ENCODE measurements at regions of chr22 and their contacts with region 1.

Region 1: DNA sequence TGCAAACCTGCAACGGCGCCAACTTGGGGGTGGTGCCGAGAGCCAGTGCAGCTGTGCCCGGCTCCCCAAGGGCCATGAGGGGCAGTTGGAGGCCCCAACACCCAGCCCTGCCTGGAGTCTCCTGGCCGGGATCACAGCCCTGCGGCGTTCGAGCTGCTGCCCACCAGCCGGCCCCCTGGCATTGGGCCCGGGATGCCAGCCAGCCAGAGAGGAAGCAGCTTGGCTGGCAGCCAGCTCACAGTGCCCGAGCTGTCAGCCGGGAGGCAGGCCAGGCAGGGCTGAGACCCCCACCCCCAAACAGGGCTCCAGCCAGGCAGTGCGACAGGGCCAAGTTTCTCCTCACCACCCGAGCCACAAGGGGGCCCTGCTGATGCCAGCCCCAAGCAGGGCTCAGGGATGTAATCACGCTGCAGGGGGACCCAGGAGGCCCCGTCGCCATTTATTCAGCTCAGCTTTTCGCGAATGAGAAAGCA is 26.0 kb upstream of the TCF20 start:
- DNase-seq: peak; percentile 60 to 72 (median 67)
- H3K4me3 ChIP-seq: no peak overlapping the region
- H3K27ac ChIP-seq: no peak overlapping the region
- H3K4me1 ChIP-seq: peaks cover 5 to 48% (median 42%) of the 10 kb centered on the region in 4 experiments
- H3K27me3 ChIP-seq: no peaks in the 10 kb centered on the region

Region 2: DNA sequence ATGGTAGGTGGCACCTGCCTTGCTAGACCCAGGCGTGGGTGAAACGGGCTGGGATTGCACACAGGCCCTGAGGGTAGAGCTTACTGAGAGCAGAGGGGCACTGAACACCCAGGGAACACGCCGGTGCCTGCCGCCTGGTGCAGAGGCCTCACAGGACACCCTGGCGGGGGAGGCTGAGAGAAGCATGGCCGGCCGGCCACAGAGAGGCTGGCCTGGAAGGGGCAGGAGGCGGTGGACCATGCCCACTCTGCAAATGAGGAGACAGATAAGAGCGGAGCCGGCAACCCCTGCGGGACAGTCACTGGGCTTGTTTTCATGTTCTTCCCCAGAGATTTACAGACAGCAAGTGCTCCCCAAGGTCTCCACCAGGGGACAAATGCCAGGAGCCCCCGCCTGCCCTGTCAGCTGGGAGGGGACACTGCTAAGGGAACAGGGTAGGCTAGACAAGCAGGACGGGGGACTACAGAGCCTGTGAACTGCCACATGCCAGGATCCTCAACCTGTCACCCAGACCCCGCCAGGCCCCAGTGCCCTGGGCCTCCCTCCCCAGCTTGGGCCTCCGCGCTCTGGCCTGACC is 12.6 kb after region 1 on chr22:
- CTCF ChIA-PET with region 1: interaction called, 29 read pairs
- POLR2A ChIA-PET with region 1: no interaction called
- DNase-seq: no peak
- H3K4me3 ChIP-seq: no peak overlapping the region
- H3K27ac ChIP-seq: no peak overlapping the region
- H3K4me1 ChIP-seq: peaks cover 0 to 22% (median 6%) of the 10 kb centered on the region in 4 experiments
- H3K27me3 ChIP-seq: no peaks in the 10 kb centered on the region

Region 3: GRCh38 chr22:42313804-42314581 is 17.6 kb after region 1 on chr22:
- CTCF ChIA-PET with region 1: interaction called, 29 read pairs
- POLR2A ChIA-PET with region 1: no interaction called
- DNase-seq: peak; percentile 50 to 77 (median 73)
- H3K4me3 ChIP-seq: no peak overlapping the region
- H3K27ac ChIP-seq: no peak overlapping the region
- H3K4me1 ChIP-seq: peaks cover 0 to 31% (median 8%) of the 10 kb centered on the region in 4 experiments
- H3K27me3 ChIP-seq: no peaks in the 10 kb centered on the region

Measured in common myeloid progenitor, CD34-positive (primary cell).